Psoas muscle (tissue), 8 donors: ENCODE measurements at regions of chr1 and their contacts with region 1.

Region 1: GRCh38 chr1:22500471-22500870 is 48.8 kb downstream of the ZBTB40 start:
- DNase-seq: peak; percentile 28 to 55
- ATAC-seq: peak in 2 of 4 donors; percentile 53 to 73
- H3K4me3 ChIP-seq: no peak overlapping the region
- H3K27ac ChIP-seq: no peak overlapping the region
- H3K4me1 ChIP-seq: peaks cover 26% of the 10 kb centered on the region
- H3K27me3 ChIP-seq: no peaks in the 10 kb centered on the region
- CTCF ChIP-seq: no peak

Region 2: DNA sequence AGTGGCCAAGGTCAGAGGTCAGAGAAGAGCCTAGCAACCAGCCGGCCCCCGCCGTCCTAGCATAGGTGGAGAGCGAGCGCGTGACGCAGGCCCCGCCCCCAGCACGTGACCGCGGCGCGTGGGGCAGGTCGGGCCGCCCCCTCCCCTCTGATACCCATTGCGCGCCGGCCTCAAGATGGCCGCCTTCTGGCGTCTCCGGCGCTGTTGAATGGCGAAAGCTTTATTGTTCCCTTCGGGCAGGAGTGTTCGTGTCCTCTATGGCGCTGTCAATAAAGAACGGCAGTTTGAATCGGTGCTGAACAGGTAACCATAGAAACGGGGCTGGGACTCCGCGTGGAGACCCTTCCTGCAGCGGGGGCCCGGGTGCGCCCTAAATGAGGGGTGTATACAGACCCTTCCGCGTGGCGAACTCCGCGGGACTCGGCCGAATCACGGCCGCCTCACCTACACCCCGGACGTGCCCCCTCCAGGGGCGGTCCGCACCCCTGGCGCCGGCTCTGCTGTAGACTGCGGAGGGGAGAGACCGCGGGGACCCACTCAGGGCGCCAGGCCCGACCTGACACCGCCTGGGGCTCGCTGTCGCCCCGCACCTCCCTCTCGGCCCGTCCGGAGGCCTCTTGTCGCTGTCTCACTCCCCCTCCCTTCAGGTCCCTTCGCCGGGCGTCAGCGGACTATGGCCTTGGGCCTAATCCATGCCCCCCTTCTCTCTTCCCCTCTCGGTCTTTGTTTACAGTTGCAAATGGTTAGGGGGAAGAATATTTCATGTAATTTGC is 48.6 kb before region 1 on chr1 and contains the start of gene ZBTB40:
- intact Hi-C with region 1: loop called in 1 of 2 experiments (anchors 2 kb)
- DNase-seq: peak; percentile 98 to 99
- ATAC-seq: peak; percentile 95 to 99 (median 98)
- H3K4me3 ChIP-seq: peak within 1 kb of the TSS; percentile 93
- H3K27ac ChIP-seq: peak within 1 kb of the TSS; percentile 88
- H3K4me1 ChIP-seq: peaks cover 43% of the 10 kb centered on the region
- H3K27me3 ChIP-seq: no peaks in the 10 kb centered on the region
- CTCF ChIP-seq: no peak
- total RNA-seq, gene ZBTB40: 7.2 to 14.1 (median 10.3) TPM

Region 3: GRCh38 chr1:22484706-22485345 is 15.6 kb before region 1 on chr1:
- intact Hi-C with region 1: no loop called
- DNase-seq: no peak
- ATAC-seq: no peak
- H3K4me3 ChIP-seq: no peak overlapping the region
- H3K27ac ChIP-seq: no peak overlapping the region
- H3K4me1 ChIP-seq: no peaks in the 10 kb centered on the region
- H3K27me3 ChIP-seq: no peaks in the 10 kb centered on the region
- CTCF ChIP-seq: no peak